Naive thymus-derived CD4-positive, alpha-beta T cell (primary cell): ENCODE measurements at regions of chr3 and their contacts with region 1.

Region 1: DNA sequence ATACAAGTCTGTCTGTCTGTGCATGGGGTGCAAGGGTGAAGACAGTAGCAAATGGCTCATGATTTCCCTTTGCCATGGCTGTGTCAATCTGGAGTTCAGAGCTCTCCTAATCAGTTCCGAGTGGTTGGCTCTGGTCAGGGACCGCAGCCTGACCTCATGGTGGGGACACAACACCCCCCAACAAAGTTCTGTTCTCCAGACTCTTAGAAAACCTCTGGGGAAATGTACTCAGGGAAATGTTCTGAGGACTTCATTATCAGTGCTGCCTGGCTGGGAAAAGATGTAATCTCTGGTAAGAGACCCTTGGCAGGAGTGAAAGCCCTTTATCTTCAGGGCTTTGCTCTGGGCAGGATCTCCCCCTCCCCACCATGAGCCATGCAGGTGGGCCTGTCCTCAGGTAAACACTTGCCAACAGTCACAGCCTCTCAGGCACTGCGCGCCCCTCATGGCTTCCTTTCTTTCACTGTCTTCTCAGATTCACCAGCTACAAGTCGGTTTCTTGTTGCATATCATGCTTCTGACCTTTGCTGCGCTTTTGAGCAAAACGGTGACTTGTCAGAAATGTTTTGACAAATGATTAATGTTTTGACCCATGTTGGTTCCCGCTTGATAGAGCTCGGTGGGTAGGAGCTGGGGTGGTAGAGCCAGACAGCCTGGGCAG is 95.5 kb downstream of the ST6GAL1 start:
- DNase-seq: peak in 4 of 9 donors; percentile 35 to 45 (median 41)
- ATAC-seq: peak; percentile 17
- H3K4me3 ChIP-seq: peak overlapping the region; percentile 68
- H3K4me3 Mint-ChIP-seq: peak overlapping the region; percentile 88 to 97 (median 93)
- H3K27ac ChIP-seq: peak overlapping the region; percentile 78
- H3K27ac Mint-ChIP-seq: peak overlapping the region; percentile 86 to 99 (median 92)
- H3K4me1 ChIP-seq: peaks cover 31 to 45% of the 10 kb centered on the region in 2 donors
- H3K4me1 Mint-ChIP-seq: peaks cover 40 to 73% (median 61%) of the 10 kb centered on the region in 7 donors
- H3K27me3 ChIP-seq: no peaks in the 10 kb centered on the region
- H3K27me3 Mint-ChIP-seq: no peaks in the 10 kb centered on the region

Region 2: GRCh38 chr3:186570096-186570940 is 455.5 kb before region 1 on chr3 and contains the start of gene DNAJB11:
- CTCF ChIA-PET with region 1: no interaction called
- POLR2A ChIA-PET with region 1: interaction called, 6 read pairs
- intact Hi-C with region 1: loop called (anchors 5 to 10 kb)
- DNase-seq: peak; percentile 83 to 100 (median 99)
- ATAC-seq: peak; percentile 91
- H3K4me3 ChIP-seq: peak within 1 kb of the TSS; percentile 85
- H3K4me3 Mint-ChIP-seq: peak within 1 kb of the TSS; percentile 83 to 98 (median 95)
- H3K27ac ChIP-seq: peak within 1 kb of the TSS; percentile 95
- H3K27ac Mint-ChIP-seq: peak within 1 kb of the TSS; percentile 85 to 99 (median 98)
- H3K4me1 ChIP-seq: peaks cover 25 to 33% of the 10 kb centered on the region in 2 donors
- H3K4me1 Mint-ChIP-seq: peaks cover 20 to 70% (median 66%) of the 10 kb centered on the region in 7 donors
- H3K27me3 ChIP-seq: no peaks in the 10 kb centered on the region
- H3K27me3 Mint-ChIP-seq: peaks cover 0 to 4% (median 0%) of the 10 kb centered on the region in 5 donors
- total RNA-seq, gene DNAJB11: 29.9 to 75.2 (median 63.1) TPM

Region 3: GRCh38 chr3:186826976-186827731 is 198.6 kb before region 1 on chr3:
- CTCF ChIA-PET with region 1: no interaction called
- POLR2A ChIA-PET with region 1: no interaction called
- intact Hi-C with region 1: no loop called
- DNase-seq: peak; percentile 79 to 92 (median 87)
- ATAC-seq: peak; percentile 96
- H3K4me3 ChIP-seq: peak overlapping the region; percentile 66
- H3K4me3 Mint-ChIP-seq: peak overlapping the region; percentile 53 to 91 (median 80)
- H3K27ac ChIP-seq: peak overlapping the region; percentile 52
- H3K27ac Mint-ChIP-seq: peak overlapping the region in 2 of 9 donors; percentile 18 to 19
- H3K4me1 ChIP-seq: peaks cover 6 to 21% of the 10 kb centered on the region in 2 donors
- H3K4me1 Mint-ChIP-seq: peaks cover 15 to 24% (median 20%) of the 10 kb centered on the region in 7 donors
- H3K27me3 ChIP-seq: peaks cover 0 to 22% of the 10 kb centered on the region in 2 donors
- H3K27me3 Mint-ChIP-seq: peaks cover 45 to 61% (median 52%) of the 10 kb centered on the region in 5 donors

Region 4: DNA sequence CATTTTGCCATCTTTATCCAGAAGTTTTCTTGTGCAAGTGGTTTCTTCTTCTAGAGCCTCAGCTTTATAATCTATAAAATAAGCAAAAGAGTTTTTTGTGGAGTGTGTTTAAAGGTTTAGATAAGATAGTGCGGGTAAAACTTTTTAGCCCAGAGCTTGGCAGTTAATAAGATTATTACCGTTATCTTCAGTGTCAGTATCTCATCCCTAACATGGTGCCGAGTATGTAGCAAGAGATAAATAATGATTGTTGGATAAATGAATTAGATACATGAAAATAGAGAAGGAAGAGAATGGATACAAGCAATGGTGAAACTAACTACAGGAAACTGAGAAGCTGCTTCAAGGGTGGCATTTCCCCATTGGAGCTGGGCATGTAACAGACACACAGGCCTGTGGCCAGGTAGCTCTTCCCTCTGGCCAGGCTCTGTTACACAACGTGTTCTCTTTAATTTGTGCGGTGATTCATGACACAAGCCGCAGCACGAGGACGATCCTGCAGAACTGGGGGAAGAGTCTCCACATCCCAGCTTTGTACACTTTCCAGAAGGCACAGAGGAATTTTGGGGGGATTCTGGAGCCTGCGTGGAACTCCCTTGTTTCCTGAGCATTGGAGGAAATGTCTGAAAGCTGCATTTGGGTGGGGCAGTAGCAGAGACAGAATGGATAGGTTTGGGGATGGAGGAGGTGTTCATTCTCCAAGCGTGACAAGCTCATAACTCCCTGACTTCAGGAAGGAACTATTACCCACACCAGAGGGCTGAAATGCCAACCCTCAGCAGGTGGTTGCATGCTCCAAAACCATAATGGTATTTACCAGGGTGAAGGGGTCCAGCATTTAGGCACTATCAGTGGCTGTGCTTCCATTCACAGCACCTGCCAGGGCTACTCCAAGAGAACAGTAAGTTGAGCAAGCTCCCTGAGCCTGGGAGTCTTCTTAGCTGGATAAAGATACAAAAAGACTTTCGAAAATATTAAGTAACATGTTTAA is 109.7 kb before region 1 on chr3:
- CTCF ChIA-PET with region 1: no interaction called
- POLR2A ChIA-PET with region 1: interaction called, 10 read pairs
- intact Hi-C with region 1: no loop called
- DNase-seq: no peak
- ATAC-seq: peak; percentile 36
- H3K4me3 ChIP-seq: peak overlapping the region; percentile 9
- H3K4me3 Mint-ChIP-seq: peak overlapping the region in 7 of 10 donors; percentile 4 to 66 (median 41)
- H3K27ac ChIP-seq: no peak overlapping the region
- H3K27ac Mint-ChIP-seq: peak overlapping the region in 6 of 9 donors; percentile 36 to 81 (median 46)
- H3K4me1 ChIP-seq: peaks cover 9 to 24% of the 10 kb centered on the region in 2 donors
- H3K4me1 Mint-ChIP-seq: peaks cover 22 to 68% (median 56%) of the 10 kb centered on the region in 7 donors
- H3K27me3 ChIP-seq: no peaks in the 10 kb centered on the region
- H3K27me3 Mint-ChIP-seq: peaks cover 0 to 3% (median 0%) of the 10 kb centered on the region in 5 donors

Region 5: GRCh38 chr3:187000711-187001151 is 25.1 kb before region 1 on chr3:
- CTCF ChIA-PET with region 1: interaction called, 4 read pairs
- POLR2A ChIA-PET with region 1: interaction called, 6 read pairs
- intact Hi-C with region 1: loop called in 1 of 2 experiments (anchors 1 kb)
- DNase-seq: peak in 1 of 9 donors; percentile 38
- ATAC-seq: peak; percentile 53
- H3K4me3 ChIP-seq: no peak overlapping the region
- H3K4me3 Mint-ChIP-seq: peak overlapping the region in 2 of 10 donors; percentile 6 to 59
- H3K27ac ChIP-seq: no peak overlapping the region
- H3K27ac Mint-ChIP-seq: peak overlapping the region in 8 of 9 donors; percentile 14 to 89 (median 50)
- H3K4me1 ChIP-seq: peaks cover 6 to 17% of the 10 kb centered on the region in 2 donors
- H3K4me1 Mint-ChIP-seq: peaks cover 42 to 77% (median 58%) of the 10 kb centered on the region in 7 donors
- H3K27me3 ChIP-seq: no peaks in the 10 kb centered on the region
- H3K27me3 Mint-ChIP-seq: no peaks in the 10 kb centered on the region

Region 6: GRCh38 chr3:187041362-187042307 is 15.8 kb after region 1 on chr3:
- CTCF ChIA-PET with region 1: interaction called, 7 read pairs
- POLR2A ChIA-PET with region 1: interaction called, 226 read pairs
- intact Hi-C with region 1: loop called (anchors 1 kb)
- DNase-seq: peak in 8 of 9 donors; percentile 38 to 77 (median 61)
- ATAC-seq: peak; percentile 93
- H3K4me3 ChIP-seq: peak overlapping the region; percentile 12
- H3K4me3 Mint-ChIP-seq: peak overlapping the region; percentile 56 to 88 (median 80)
- H3K27ac ChIP-seq: peak overlapping the region; percentile 67
- H3K27ac Mint-ChIP-seq: peak overlapping the region; percentile 93 to 99 (median 96)
- H3K4me1 ChIP-seq: peaks cover 41 to 79% of the 10 kb centered on the region in 2 donors
- H3K4me1 Mint-ChIP-seq: peaks cover 59 to 95% (median 84%) of the 10 kb centered on the region in 7 donors
- H3K27me3 ChIP-seq: no peaks in the 10 kb centered on the region
- H3K27me3 Mint-ChIP-seq: no peaks in the 10 kb centered on the region

Region 7: DNA sequence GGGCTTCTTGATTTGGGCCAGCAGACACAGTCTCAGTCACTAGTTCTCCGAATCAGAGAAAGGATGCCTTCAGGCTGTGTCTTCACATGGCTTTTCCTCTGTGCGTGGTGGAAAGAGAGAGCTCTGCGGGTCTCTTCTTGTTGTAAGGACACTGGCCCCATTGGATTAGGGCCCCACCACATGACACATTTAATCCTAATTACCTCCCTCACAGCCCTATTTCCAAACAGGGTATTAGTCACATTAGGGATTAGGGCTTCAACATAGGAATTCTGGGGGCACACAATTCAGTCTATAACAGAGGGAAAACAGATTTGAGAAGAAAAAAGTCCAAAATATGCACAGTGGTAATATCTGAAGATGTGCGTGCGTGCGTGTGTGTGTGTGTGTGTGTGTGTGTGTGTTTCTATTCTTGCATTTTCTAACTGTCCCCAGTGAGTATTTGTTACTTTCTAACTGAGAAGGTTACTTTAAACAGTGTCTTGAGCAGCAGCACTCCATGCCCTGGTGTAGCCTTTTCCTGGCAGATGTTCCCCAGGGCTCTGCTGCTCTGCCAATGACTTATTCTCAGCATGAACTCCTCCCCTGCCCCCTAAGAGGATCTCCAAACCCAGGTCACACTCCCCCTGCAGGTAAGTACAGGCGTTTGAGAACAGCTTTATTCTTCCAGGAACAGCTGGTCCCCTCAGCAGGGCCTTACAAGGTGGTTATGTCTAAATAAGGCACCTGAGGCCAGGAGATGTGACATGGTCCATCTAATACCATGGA is 40.6 kb after region 1 on chr3:
- CTCF ChIA-PET with region 1: interaction called, 13 read pairs
- POLR2A ChIA-PET with region 1: interaction called, 20 read pairs
- intact Hi-C with region 1: loop called (anchors 1 kb)
- DNase-seq: peak in 7 of 9 donors; percentile 54 to 75 (median 67)
- ATAC-seq: peak; percentile 83
- H3K4me3 ChIP-seq: no peak overlapping the region
- H3K4me3 Mint-ChIP-seq: peak overlapping the region in 7 of 10 donors; percentile 18 to 42 (median 31)
- H3K27ac ChIP-seq: peak overlapping the region; percentile 14
- H3K27ac Mint-ChIP-seq: peak overlapping the region; percentile 61 to 92 (median 84)
- H3K4me1 ChIP-seq: peaks cover 13 to 38% of the 10 kb centered on the region in 2 donors
- H3K4me1 Mint-ChIP-seq: peaks cover 49 to 87% (median 79%) of the 10 kb centered on the region in 7 donors
- H3K27me3 ChIP-seq: no peaks in the 10 kb centered on the region
- H3K27me3 Mint-ChIP-seq: no peaks in the 10 kb centered on the region

Region 8: GRCh38 chr3:187139126-187139894 is 113.5 kb after region 1 on chr3 and contains the start of gene RPL39L:
- CTCF ChIA-PET with region 1: interaction called, 6 read pairs
- POLR2A ChIA-PET with region 1: interaction called, 25 read pairs
- intact Hi-C with region 1: loop called in 1 of 2 experiments (anchors 1 kb)
- DNase-seq: peak; percentile 87 to 95 (median 92)
- ATAC-seq: peak; percentile 97
- H3K4me3 ChIP-seq: peak within 1 kb of the TSS; percentile 94
- H3K4me3 Mint-ChIP-seq: peak within 1 kb of the TSS; percentile 80 to 94 (median 89)
- H3K27ac ChIP-seq: peak within 1 kb of the TSS; percentile 76
- H3K27ac Mint-ChIP-seq: peak within 1 kb of the TSS; percentile 86 to 98 (median 94)
- H3K4me1 ChIP-seq: peaks cover 9 to 17% of the 10 kb centered on the region in 2 donors
- H3K4me1 Mint-ChIP-seq: peaks cover 6 to 26% (median 17%) of the 10 kb centered on the region in 7 donors
- H3K27me3 ChIP-seq: no peaks in the 10 kb centered on the region
- H3K27me3 Mint-ChIP-seq: peaks cover 0 to 2% (median 0%) of the 10 kb centered on the region in 5 donors
- total RNA-seq, gene RPL39L: 0.81 to 14.0 (median 2.8) TPM in 4 of 5 experiments, not detected in the other